Caco-2 (cell line): ENCODE measurements at regions of chr1 and their contacts with region 1.

Region 1: GRCh38 chr1:210200124-210200736 is 32.4 kb upstream of the SERTAD4 start:
- DNase-seq: no peak
- H3K4me3 ChIP-seq: no peak overlapping the region
- H3K4me3 Mint-ChIP-seq: no peak overlapping the region
- H3K27ac Mint-ChIP-seq: no peak overlapping the region
- H3K4me1 ChIP-seq: no peaks in the 10 kb centered on the region
- H3K4me1 Mint-ChIP-seq: no peaks in the 10 kb centered on the region
- H3K27me3 ChIP-seq: no peaks in the 10 kb centered on the region
- H3K27me3 Mint-ChIP-seq: no peaks in the 10 kb centered on the region
- CTCF ChIP-seq: no peak

Region 2: GRCh38 chr1:209895709-209896108 is 304.5 kb before region 1 on chr1:
- CTCF ChIA-PET with region 1: no interaction called
- POLR2A ChIA-PET with region 1: no interaction called
- intact Hi-C with region 1: no loop called
- DNase-seq: no peak
- H3K4me3 ChIP-seq: no peak overlapping the region
- H3K4me3 Mint-ChIP-seq: no peak overlapping the region
- H3K27ac Mint-ChIP-seq: no peak overlapping the region
- H3K4me1 ChIP-seq: no peaks in the 10 kb centered on the region
- H3K4me1 Mint-ChIP-seq: no peaks in the 10 kb centered on the region
- H3K27me3 ChIP-seq: no peaks in the 10 kb centered on the region; the same call in 1 of the 2 replicates
- H3K27me3 Mint-ChIP-seq: no peaks in the 10 kb centered on the region
- CTCF ChIP-seq: no peak

Region 3: GRCh38 chr1:210001751-210002150 is 198.5 kb before region 1 on chr1:
- CTCF ChIA-PET with region 1: no interaction called
- POLR2A ChIA-PET with region 1: no interaction called
- intact Hi-C with region 1: no loop called
- DNase-seq: no peak
- H3K4me3 ChIP-seq: no peak overlapping the region
- H3K4me3 Mint-ChIP-seq: no peak overlapping the region
- H3K27ac Mint-ChIP-seq: no peak overlapping the region
- H3K4me1 ChIP-seq: no peaks in the 10 kb centered on the region; the same call in 1 of the 2 replicates
- H3K4me1 Mint-ChIP-seq: no peaks in the 10 kb centered on the region
- H3K27me3 ChIP-seq: no peaks in the 10 kb centered on the region
- H3K27me3 Mint-ChIP-seq: peaks cover 12% of the 10 kb centered on the region
- CTCF ChIP-seq: no peak

Region 4: GRCh38 chr1:210151052-210151672 is 49.1 kb before region 1 on chr1:
- CTCF ChIA-PET with region 1: no interaction called
- POLR2A ChIA-PET with region 1: no interaction called
- intact Hi-C with region 1: loop called (anchors 5 kb)
- DNase-seq: no peak
- H3K4me3 ChIP-seq: no peak overlapping the region
- H3K4me3 Mint-ChIP-seq: peak overlapping the region; percentile 27
- H3K27ac Mint-ChIP-seq: no peak overlapping the region
- H3K4me1 ChIP-seq: peaks cover 8% of the 10 kb centered on the region
- H3K4me1 Mint-ChIP-seq: peaks cover 8% of the 10 kb centered on the region
- H3K27me3 ChIP-seq: no peaks in the 10 kb centered on the region
- H3K27me3 Mint-ChIP-seq: no peaks in the 10 kb centered on the region
- CTCF ChIP-seq: no peak

Region 5: GRCh38 chr1:210239349-210240111 is 39.3 kb after region 1 on chr1:
- CTCF ChIA-PET with region 1: no interaction called
- POLR2A ChIA-PET with region 1: no interaction called
- intact Hi-C with region 1: no loop called
- DNase-seq: peak; percentile 49 to 57
- H3K4me3 ChIP-seq: no peak overlapping the region
- H3K4me3 Mint-ChIP-seq: no peak overlapping the region
- H3K27ac Mint-ChIP-seq: no peak overlapping the region
- H3K4me1 ChIP-seq: no peaks in the 10 kb centered on the region
- H3K4me1 Mint-ChIP-seq: peaks cover 8% of the 10 kb centered on the region
- H3K27me3 ChIP-seq: no peaks in the 10 kb centered on the region
- H3K27me3 Mint-ChIP-seq: no peaks in the 10 kb centered on the region
- CTCF ChIP-seq: peak; percentile 65 to 70